Activated CD4-positive, alpha-beta T cell treated with anti-CD3 and anti-CD28 coated beads, Interleukin-2, amount 10 ng/mL, durations not matched to agents 24 days and 14 days (primary cell): ENCODE measurements at regions of chr1 and their contacts with region 1.

Region 1: DNA sequence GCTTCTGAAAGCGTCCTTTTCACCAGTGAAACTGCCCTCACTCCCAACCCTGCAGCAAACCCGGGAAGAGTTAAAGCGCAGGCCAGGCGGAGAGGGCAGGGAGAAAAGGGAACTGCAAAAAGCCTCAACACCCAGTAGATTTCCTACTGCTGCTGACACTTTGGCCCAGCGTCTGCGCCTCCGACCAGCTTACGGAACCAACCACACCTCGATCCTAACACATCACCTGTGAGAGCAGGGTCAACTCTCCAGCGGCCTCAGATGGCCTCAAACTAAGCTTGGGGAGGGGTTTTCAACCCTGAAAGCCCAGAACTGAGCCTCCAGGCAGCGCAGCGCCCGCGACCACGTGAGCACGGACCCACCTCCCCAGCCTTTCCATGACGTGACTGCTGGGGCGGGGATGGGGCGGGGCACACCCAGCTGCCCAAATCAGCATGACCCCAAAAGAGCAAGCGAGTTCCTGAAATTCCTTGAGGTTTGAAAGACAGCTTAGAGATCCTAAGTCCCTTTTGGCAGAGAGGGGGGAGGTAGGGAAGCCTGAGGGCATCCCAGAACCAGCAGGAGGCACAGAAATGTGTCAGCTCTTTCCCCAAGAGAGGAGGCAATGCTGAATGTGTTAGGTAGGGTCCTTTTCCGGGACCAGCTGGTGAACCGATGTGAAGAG is 59.1 kb downstream of the ITPKB start:
- DNase-seq: peak; percentile 92
- H3K4me3 Mint-ChIP-seq: peak overlapping the region; percentile 82
- H3K27ac Mint-ChIP-seq: peak overlapping the region; percentile 96
- H3K4me1 Mint-ChIP-seq: peaks cover 86% of the 10 kb centered on the region
- H3K27me3 Mint-ChIP-seq: no peaks in the 10 kb centered on the region

Region 2: DNA sequence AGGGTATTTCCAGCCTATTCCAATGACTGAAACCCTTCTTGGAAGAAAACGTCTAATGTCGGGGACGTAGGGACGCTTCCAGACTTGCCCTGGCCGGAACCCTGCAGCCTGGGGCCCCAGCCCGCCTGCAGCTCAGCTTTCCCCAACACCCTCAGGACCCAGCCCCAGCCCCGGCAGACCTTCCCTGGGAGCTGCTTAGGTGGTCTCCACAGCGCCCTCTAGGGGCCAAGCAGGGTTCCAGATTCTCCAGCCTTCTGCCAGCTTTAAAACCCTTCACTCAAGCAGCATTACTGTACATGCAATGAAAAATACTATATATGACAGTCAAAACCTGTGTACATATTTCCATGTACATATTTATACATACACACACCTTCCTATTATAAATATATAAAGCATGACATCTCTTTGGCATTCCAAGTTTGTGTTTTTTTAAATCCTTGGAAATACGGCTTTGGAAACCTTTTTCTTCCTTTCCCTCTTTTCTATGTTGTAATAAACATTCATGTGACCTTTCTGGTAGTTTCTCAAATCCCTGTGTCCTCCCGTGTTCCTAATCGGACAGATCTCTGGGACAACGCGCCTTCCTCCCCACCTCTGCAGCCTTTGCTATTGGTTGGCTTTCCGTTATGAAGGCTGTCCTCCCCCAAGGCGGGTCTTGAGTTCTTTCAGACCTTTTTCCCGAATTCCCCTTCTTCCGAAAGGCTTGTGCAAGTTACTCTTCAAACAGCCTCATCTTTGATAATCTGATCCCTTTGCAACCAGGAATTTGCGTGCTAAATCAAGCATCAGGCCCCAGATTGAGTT is 71.1 kb before region 1 on chr1:
- intact Hi-C with region 1: no loop called
- DNase-seq: peak; percentile 87
- H3K4me3 Mint-ChIP-seq: no peak overlapping the region
- H3K27ac Mint-ChIP-seq: no peak overlapping the region
- H3K4me1 Mint-ChIP-seq: no peaks in the 10 kb centered on the region
- H3K27me3 Mint-ChIP-seq: peaks cover 12% of the 10 kb centered on the region

Region 3: DNA sequence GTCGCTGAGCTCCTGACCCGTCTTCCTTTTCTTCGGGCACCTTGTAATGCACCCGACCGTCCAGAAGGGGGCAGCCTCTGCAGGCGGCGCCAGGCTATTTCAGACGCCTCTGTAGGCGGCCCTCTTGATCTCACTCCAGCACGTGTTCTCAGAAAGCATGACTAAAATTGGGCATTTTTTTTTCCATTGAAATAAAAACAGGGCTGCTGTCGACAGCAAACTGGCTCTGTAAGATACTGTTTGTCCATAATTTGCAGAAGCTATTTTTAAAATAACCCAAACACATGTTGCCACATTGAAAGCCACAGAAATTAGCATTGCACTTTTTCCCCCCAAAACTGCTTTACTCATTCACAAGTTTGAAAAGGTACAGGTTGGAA is 53.4 kb before region 1 on chr1:
- intact Hi-C with region 1: loop called (anchors 2 kb)
- DNase-seq: peak; percentile 94
- H3K4me3 Mint-ChIP-seq: peak overlapping the region; percentile 35
- H3K27ac Mint-ChIP-seq: peak overlapping the region; percentile 88
- H3K4me1 Mint-ChIP-seq: peaks cover 21% of the 10 kb centered on the region
- H3K27me3 Mint-ChIP-seq: peaks cover 8% of the 10 kb centered on the region

Region 4: GRCh38 chr1:226642876-226643576 is 37.0 kb before region 1 on chr1:
- intact Hi-C with region 1: loop called (anchors 2 kb)
- DNase-seq: peak; percentile 80
- H3K4me3 Mint-ChIP-seq: peak overlapping the region; percentile 79
- H3K27ac Mint-ChIP-seq: peak overlapping the region; percentile 91
- H3K4me1 Mint-ChIP-seq: peaks cover 40% of the 10 kb centered on the region
- H3K27me3 Mint-ChIP-seq: no peaks in the 10 kb centered on the region

Region 5: GRCh38 chr1:226656601-226657277 is 23.2 kb before region 1 on chr1:
- intact Hi-C with region 1: no loop called
- DNase-seq: peak; percentile 67
- H3K4me3 Mint-ChIP-seq: no peak overlapping the region
- H3K27ac Mint-ChIP-seq: peak overlapping the region; percentile 62
- H3K4me1 Mint-ChIP-seq: peaks cover 85% of the 10 kb centered on the region
- H3K27me3 Mint-ChIP-seq: no peaks in the 10 kb centered on the region

Region 6: DNA sequence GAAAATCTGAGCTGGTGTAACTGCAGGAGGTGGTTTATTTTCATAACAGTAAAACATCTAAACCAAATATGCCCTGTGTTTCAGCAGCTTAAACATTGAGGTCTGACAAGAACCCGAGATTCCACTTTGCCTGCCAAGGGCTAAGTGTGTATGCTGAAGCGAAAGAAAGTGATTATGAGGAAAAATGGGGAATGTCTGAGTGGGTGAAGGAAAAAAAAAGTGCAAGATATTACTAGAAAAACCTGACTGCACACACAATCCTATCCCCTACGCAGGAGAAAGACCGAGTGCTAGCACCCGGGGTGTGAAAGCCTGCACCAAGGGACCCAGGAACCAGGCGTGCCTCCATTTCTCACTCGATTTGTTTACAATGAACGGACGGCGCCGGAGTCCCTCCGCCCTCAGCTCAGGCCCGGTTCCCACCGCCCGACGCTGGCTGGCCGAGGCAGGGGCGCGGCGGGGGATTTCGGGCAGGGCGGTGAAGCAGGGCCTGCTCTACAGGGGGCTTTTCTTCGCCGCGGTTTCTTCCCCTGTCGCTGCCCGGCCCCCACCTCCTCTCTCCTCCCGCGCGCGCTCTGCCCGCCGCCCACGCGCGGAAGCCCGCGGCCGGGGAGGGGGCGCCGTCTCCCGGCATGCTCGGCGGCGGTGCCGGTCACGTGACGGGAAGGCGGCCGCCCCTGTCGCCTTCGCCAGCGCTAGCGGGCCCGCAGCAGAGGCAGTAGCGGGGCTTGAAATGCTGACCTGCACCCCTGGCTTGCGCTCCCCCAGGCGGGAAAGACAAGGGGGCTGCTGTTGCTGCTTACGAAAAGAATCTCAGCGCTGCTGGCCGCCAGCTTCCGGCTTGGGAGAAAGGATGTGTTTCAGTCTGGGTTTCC is 23.2 kb after region 1 on chr1:
- intact Hi-C with region 1: loop called (anchors 1 kb)
- DNase-seq: peak; percentile 96
- H3K4me3 Mint-ChIP-seq: peak overlapping the region; percentile 86
- H3K27ac Mint-ChIP-seq: peak overlapping the region; percentile 92
- H3K4me1 Mint-ChIP-seq: peaks cover 48% of the 10 kb centered on the region
- H3K27me3 Mint-ChIP-seq: no peaks in the 10 kb centered on the region

Region 7: DNA sequence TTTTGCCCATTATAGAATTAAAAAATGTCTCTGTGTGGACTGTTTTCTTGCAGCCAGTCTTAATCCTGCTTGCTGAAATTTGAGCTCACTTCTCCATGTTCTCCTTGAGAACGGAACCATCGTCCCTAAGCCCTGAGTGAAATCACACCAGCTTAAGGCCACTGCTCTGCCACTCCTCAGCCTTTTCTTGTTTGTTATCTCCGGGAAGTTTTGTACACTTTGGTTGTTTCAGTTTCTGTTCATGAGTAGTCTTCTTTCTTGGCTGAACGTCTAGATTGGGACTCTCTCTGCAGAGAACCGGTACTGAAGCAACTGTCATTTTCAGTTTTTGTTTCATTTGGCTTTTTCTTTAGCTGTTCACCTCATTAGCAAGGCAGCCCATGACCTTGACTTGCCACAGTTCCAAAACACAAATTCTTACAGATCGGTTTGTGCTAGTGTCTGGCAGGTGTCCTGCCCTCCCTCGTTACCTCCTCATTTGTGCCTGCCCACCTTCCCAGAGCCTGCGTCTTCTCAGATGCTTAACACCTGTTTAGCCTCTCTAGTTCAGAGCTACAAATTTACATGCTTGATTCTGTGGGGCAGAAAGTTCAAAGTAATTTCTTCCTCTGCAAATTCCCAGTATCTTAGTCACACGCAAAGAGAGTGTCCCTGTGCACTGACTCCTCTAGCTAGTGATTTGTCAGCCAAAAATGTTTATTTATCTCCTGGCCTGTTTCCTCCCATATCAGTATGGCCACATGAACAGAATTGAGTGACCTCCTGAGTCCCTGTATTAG is 202.8 kb after region 1 on chr1:
- intact Hi-C with region 1: loop called (anchors 5 kb)
- DNase-seq: peak; percentile 84
- H3K4me3 Mint-ChIP-seq: peak overlapping the region; percentile 72
- H3K27ac Mint-ChIP-seq: peak overlapping the region; percentile 95
- H3K4me1 Mint-ChIP-seq: peaks cover 53% of the 10 kb centered on the region
- H3K27me3 Mint-ChIP-seq: no peaks in the 10 kb centered on the region